AG04449 (cell line): ENCODE measurements at regions of chr3 and their contacts with region 1.

Region 1: GRCh38 chr3:127735767-127736704 is 63.3 kb downstream of the ABTB1 start:
- DNase-seq: no peak
- H3K4me3 ChIP-seq: no peak overlapping the region
- CTCF ChIP-seq: no peak

Region 2: GRCh38 chr3:127629467-127630403 is 106.3 kb before region 1 on chr3:
- CTCF ChIA-PET with region 1: no interaction called
- POLR2A ChIA-PET with region 1: no interaction called
- DNase-seq: no peak
- H3K4me3 ChIP-seq: peak overlapping the region; percentile 51
- CTCF ChIP-seq: no peak

Region 3: DNA sequence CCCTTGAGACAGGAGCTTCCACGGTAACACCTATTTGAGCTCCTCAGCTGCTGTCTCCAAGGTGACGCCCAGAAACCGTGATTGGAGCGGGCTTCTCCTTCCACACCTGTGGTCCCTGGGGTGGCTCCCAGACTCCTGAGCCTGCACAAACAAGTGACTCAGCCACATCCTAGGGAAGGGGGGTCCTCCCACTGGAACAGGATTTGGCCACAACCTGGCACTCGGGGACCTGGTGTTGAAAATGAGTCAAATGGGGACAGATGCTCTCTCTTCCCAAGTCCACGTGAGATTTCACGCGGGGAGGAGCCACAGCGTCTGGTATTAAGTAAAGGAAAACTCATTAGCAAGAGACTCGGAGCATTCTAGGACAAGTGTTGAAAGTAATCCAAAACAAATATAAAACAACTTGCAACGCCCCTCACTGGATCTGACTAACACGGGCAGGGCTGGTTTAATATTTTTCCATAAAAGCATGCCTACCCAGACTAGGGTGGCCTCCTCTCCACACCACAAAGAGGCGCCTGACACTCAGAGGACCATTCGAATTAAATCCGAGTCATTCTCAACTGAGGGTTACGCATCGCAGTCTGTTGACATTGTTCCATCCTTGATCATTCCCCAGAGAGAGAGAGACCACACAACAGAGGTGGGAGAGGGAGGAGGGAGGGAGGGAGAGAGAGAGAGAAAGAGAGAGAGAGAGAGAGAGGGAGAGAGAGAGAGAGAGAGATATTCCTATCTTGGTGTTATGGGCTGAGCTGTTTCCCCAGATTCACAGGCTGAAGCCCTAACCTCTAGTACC is 11.9 kb after region 1 on chr3:
- CTCF ChIA-PET with region 1: interaction called, 12 read pairs
- POLR2A ChIA-PET with region 1: interaction called, 8 read pairs
- DNase-seq: peak; percentile 86
- H3K4me3 ChIP-seq: no peak overlapping the region
- CTCF ChIP-seq: no peak

Region 4: DNA sequence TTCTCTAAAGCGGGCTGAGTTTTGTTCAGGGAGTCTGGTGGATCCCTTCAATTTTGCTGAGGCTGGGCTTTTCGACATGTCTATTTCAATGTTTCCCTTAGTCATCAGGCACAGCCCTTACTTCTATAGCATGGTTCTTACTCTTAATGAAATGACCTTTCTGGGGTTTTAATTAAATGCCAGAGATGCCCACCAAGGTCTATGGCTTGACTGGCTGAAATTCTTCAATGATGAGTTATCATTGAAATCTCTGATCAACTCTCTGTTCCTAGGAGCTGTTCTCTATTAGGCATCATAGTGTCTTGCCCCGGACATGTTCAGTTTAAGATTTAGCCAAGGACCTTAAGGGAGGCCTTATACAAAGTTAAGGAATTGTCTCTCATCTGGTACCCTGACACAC is 145.6 kb after region 1 on chr3:
- CTCF ChIA-PET with region 1: no interaction called
- POLR2A ChIA-PET with region 1: no interaction called
- DNase-seq: no peak
- H3K4me3 ChIP-seq: no peak overlapping the region
- CTCF ChIP-seq: no peak